ENCODE measurements at regions of chr10 and their contacts with region 1.

Region 1: DNA sequence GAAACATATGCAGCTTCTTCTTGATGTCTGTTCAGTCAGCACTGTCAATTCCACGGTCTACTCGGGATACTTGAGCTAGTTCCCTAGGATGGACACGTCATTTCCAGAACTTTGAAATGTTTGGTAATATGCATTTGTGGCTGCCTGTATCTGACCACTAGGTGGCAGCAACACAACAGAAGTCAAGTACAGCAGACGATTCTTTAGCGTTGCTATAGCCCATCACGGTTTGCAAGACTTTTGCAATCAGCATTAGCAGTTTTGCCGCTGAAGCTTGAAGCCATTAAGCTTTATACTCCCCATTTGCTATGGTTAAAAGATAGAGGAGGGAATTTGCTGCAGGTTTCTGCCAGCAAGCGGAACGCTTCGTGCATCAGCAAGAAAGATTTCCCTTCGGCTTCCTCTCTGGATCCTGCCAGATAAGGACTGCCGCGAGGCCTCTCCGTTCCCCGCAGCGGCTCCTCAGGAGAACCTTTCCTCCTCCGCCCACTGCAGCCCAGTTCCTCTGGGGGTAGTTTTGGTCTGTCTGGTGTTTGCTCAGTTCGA is 63.5 kb downstream of the ABCC2 start:
- DNase-seq: peak; percentile 68
- ATAC-seq: peak; percentile 60
- H3K4me3 Mint-ChIP-seq: peak overlapping the region; percentile 42
- H3K27ac Mint-ChIP-seq: no peak overlapping the region
- H3K4me1 Mint-ChIP-seq: peaks cover 53% of the 10 kb centered on the region
- H3K27me3 Mint-ChIP-seq: peaks cover 6% of the 10 kb centered on the region; the same call in 1 of the 2 replicates
- CTCF ChIP-seq: peak; percentile 78

Region 2: GRCh38 chr10:99799613-99800012 is 46.3 kb before region 1 on chr10:
- CTCF ChIA-PET with region 1: interaction called, 15 read pairs
- POLR2A ChIA-PET with region 1: no interaction called
- DNase-seq: no peak
- ATAC-seq: 0 out of 2 replicates have a peak, but pooled peaks have one; percentile 34
- H3K4me3 Mint-ChIP-seq: no peak overlapping the region
- H3K27ac Mint-ChIP-seq: no peak overlapping the region
- H3K4me1 Mint-ChIP-seq: no peaks in the 10 kb centered on the region
- H3K27me3 Mint-ChIP-seq: no peaks in the 10 kb centered on the region
- CTCF ChIP-seq: no peak

Region 3: GRCh38 chr10:99870123-99870730 is 24.3 kb after region 1 on chr10:
- CTCF ChIA-PET with region 1: interaction called, 14 read pairs
- POLR2A ChIA-PET with region 1: interaction called, 3 read pairs
- DNase-seq: no peak
- ATAC-seq: no peak
- H3K4me3 Mint-ChIP-seq: no peak overlapping the region
- H3K27ac Mint-ChIP-seq: no peak overlapping the region
- H3K4me1 Mint-ChIP-seq: no peaks in the 10 kb centered on the region
- H3K27me3 Mint-ChIP-seq: peaks cover 15% of the 10 kb centered on the region
- CTCF ChIP-seq: no peak

Region 4: GRCh38 chr10:99917963-99918825 is 72.3 kb after region 1 on chr10:
- CTCF ChIA-PET with region 1: interaction called, 16 read pairs
- POLR2A ChIA-PET with region 1: interaction called, 3 read pairs
- DNase-seq: peak; percentile 73
- ATAC-seq: peak; percentile 49
- H3K4me3 Mint-ChIP-seq: peak overlapping the region; percentile 68
- H3K27ac Mint-ChIP-seq: peak overlapping the region; percentile 99
- H3K4me1 Mint-ChIP-seq: peaks cover 68% of the 10 kb centered on the region
- H3K27me3 Mint-ChIP-seq: no peaks in the 10 kb centered on the region
- CTCF ChIP-seq: no peak

Region 5: DNA sequence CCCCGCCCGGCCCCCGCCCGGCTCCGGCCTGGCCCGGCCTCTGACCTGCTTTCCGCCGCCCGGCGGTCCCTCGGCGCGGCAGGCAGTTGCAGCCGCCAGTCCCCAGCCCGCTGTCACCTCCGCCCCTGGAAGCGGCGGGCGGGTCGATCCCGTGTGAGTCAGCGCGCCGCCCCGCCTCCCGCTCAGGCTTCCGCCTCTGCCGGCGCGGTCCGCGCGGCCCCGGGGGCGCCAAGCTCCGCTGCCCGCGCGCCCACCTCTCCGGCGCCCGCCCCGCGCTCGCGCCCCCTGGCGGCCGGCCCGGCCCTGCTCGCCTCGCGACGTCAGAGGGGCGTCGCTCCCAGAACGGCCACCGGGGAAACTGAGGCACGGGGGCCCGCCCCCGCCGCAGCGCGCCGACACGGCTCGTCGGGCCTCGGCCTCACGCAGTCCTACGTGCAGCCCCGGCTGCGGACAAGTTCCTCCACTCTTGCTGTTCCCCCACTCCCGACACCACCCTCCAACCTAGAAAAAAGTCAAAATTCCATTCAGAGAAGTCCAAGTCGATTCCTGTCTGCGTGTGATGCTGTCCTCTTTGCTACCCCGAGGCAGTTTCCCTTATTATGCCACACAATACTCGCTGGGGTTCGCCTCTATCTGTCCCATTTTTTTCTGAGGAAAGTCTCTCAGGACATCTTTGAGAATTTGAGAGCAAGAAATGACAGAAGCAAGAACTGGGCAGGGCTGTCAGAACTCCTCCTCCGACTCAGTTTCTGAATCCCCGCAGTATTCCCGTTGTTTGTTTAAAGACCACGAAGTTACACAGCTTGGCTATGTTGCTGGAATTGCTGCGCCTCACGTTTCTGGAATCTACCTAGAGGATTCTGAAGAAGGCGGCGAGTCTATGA is 164.1 kb after region 1 on chr10 and contains the start of gene DNMBP:
- CTCF ChIA-PET with region 1: interaction called, 11 read pairs
- POLR2A ChIA-PET with region 1: no interaction called
- DNase-seq: peak; percentile 84
- ATAC-seq: peak; percentile 96
- H3K4me3 Mint-ChIP-seq: peak within 1 kb of the TSS; percentile 82
- H3K27ac Mint-ChIP-seq: no peak within 1 kb of the TSS
- H3K4me1 Mint-ChIP-seq: peaks cover 40% of the 10 kb centered on the region
- H3K27me3 Mint-ChIP-seq: peaks cover 21% of the 10 kb centered on the region
- CTCF ChIP-seq: peak; percentile 64
- total RNA-seq, gene DNMBP: 19.7 to 25.3 TPM (median 22.2 TPM) in 3 replicates

Region 6: GRCh38 chr10:100038561-100039071 is 192.7 kb after region 1 on chr10:
- CTCF ChIA-PET with region 1: interaction called, 10 read pairs
- POLR2A ChIA-PET with region 1: no interaction called
- DNase-seq: no peak
- ATAC-seq: peak; percentile 46
- H3K4me3 Mint-ChIP-seq: no peak overlapping the region
- H3K27ac Mint-ChIP-seq: peak overlapping the region; percentile 59
- H3K4me1 Mint-ChIP-seq: peaks cover 27% of the 10 kb centered on the region
- H3K27me3 Mint-ChIP-seq: no peaks in the 10 kb centered on the region
- CTCF ChIP-seq: no peak

Region 7: DNA sequence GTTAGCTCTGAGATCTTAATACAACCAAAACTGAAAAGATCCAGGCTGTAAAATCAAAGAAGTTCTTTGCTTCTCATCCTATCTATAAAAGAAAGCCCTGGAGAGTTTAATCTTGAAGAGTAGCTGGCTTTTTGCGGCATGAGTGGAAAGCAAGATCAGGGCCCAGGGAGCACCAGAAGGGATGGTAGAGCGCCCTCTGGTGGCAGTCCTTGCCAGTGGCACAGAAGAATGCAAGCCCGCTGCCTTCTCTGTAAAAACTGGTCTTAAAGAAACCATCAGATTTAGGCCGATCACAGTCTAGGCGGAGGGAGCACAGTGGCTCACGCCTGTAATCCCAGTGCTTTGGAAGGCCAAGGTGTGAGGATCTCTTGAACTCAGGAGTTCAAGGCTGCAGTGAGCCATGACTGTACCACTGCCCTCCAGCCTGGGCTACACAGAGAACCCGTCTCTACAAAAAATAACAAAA is 200.1 kb after region 1 on chr10:
- CTCF ChIA-PET with region 1: interaction called, 41 read pairs
- POLR2A ChIA-PET with region 1: no interaction called
- DNase-seq: peak; percentile 94
- ATAC-seq: peak; percentile 93
- H3K4me3 Mint-ChIP-seq: no peak overlapping the region
- H3K27ac Mint-ChIP-seq: peak overlapping the region; percentile 80
- H3K4me1 Mint-ChIP-seq: peaks cover 28% of the 10 kb centered on the region
- H3K27me3 Mint-ChIP-seq: no peaks in the 10 kb centered on the region
- CTCF ChIP-seq: peak; percentile 97

Measured in WTC11 (cell line).